AG04449 (cell line): ENCODE measurements at regions of chr1 and their contacts with region 1.

Region 1: GRCh38 chr1:41573785-41574713 is 89.6 kb upstream of the EDN2 start:
- DNase-seq: peak; percentile 34
- H3K4me3 ChIP-seq: no peak overlapping the region
- CTCF ChIP-seq: peak; percentile 93

Region 2: DNA sequence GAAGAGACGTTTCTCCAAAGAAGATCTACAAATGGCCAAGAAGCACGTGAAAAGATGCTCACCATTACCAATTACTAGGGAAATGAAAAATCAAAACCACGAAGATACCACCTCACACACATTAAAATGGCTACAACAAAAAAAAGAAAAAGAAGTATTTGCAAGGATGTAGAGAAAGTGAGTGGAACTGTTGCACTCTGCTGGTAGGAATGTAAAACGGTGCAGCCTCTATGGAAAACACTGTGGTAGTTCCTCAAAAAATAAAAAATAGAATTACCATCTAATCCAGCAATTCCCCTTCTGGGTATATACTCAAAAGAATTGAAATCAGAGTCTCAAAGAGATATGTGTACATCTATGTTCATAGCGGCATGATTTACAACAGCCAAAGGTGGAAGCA is 25.9 kb after region 1 on chr1:
- CTCF ChIA-PET with region 1: interaction called, 18 read pairs
- POLR2A ChIA-PET with region 1: no interaction called
- DNase-seq: no peak
- H3K4me3 ChIP-seq: no peak overlapping the region
- CTCF ChIP-seq: peak; percentile 41

Region 3: DNA sequence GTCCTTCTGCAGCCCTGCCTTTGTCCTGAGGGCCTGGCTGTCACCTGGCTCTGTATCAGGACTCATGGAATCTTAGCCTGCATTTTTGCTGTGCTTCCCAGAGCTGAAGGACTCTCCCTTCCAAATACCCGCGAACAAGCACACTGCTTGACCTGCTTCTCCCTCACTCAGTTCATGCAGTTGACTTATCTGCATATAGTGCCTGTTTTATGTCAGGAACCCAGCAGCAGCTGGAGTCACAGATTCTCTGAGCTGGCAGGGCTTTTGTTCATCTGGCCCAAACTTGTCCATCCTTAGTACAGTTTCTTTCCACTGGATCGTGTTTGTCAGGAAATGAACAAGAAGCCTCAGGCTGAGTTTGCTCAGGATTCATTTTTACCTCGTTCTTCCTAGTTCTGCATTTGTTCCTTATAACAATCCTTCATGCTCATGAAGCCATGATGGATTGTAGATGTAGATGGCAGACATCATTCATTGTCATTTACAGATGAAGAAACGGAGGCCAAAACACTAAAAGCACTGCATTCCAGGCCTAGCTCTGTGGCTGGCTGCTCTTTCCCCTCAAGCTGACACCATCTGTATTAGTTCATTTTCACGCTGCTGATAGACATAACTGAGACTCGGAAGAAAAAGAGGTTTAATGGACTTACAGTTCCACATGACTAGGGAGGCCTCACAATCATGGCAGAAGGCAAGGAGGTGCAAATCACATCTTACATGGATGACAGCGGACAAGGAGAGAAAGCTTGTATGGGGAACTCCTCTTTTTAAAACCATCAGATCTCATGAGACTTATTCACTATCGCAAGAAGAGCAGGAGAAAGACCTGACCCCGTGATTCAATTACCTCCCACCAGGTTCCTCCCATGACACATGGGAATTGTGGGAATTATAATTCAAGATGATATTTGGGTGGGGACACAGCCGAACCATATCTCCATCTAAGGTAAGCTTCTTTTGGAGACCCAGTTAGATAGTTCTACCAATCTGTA is 193.8 kb after region 1 on chr1:
- CTCF ChIA-PET with region 1: interaction called, 10 read pairs
- POLR2A ChIA-PET with region 1: no interaction called
- DNase-seq: no peak
- H3K4me3 ChIP-seq: no peak overlapping the region
- CTCF ChIP-seq: no peak

Region 4: GRCh38 chr1:41789419-41790260 is 215.6 kb after region 1 on chr1:
- CTCF ChIA-PET with region 1: interaction called, 88 read pairs
- POLR2A ChIA-PET with region 1: no interaction called
- DNase-seq: no peak
- H3K4me3 ChIP-seq: no peak overlapping the region
- CTCF ChIP-seq: no peak

Region 5: GRCh38 chr1:41846625-41847405 is 272.8 kb after region 1 on chr1:
- CTCF ChIA-PET with region 1: interaction called, 10 read pairs
- POLR2A ChIA-PET with region 1: no interaction called
- DNase-seq: no peak
- H3K4me3 ChIP-seq: no peak overlapping the region
- CTCF ChIP-seq: no peak